ENCODE measurements at regions of chr16 and their contacts with region 1.

Region 1: GRCh38 chr16:30032083-30032819 is 1.2 kb upstream of the TLCD3B start:
- DNase-seq: no peak
- ATAC-seq: peak; percentile 77
- H3K4me3 ChIP-seq: no peak overlapping the region
- H3K27ac ChIP-seq: no peak overlapping the region
- H3K4me1 ChIP-seq: peaks cover 13% of the 10 kb centered on the region
- H3K27me3 ChIP-seq: peaks cover 6 to 12% of the 10 kb centered on the region in 2 experiments; a peak in 3 of 4 replicates
- CTCF ChIP-seq: peak; percentile 79 to 85 (median 84)
- EP300 ChIP-seq: no peak
- POLR2A ChIP-seq: no peak
- RAD21 ChIP-seq: peak; percentile 88

Region 2: GRCh38 chr16:29694384-29695195 is 337.7 kb before region 1 on chr16:
- CTCF ChIA-PET with region 1: no interaction called
- POLR2A ChIA-PET with region 1: interaction called, 6 read pairs
- RAD21 ChIA-PET with region 1: no interaction called
- SMC1A ChIA-PET with region 1: no interaction called
- in situ Hi-C with region 1: loop called (anchors 5 kb)
- intact Hi-C with region 1: no loop called
- DNase-seq: no peak
- ATAC-seq: peak; percentile 44
- H3K4me3 ChIP-seq: no peak overlapping the region
- H3K27ac ChIP-seq: no peak overlapping the region
- H3K4me1 ChIP-seq: peaks cover 7% of the 10 kb centered on the region
- H3K27me3 ChIP-seq: no peaks in the 10 kb centered on the region
- CTCF ChIP-seq: no peak
- EP300 ChIP-seq: no peak
- POLR2A ChIP-seq: no peak
- RAD21 ChIP-seq: no peak

Region 3: GRCh38 chr16:29790183-29790952 is 241.9 kb before region 1 on chr16 and contains the start of gene KIF22:
- CTCF ChIA-PET with region 1: no interaction called
- POLR2A ChIA-PET with region 1: no interaction called
- RAD21 ChIA-PET with region 1: no interaction called
- SMC1A ChIA-PET with region 1: no interaction called
- in situ Hi-C with region 1: no loop called
- intact Hi-C with region 1: no loop called
- DNase-seq: peak; percentile 97
- ATAC-seq: peak; percentile 98
- H3K4me3 ChIP-seq: peak within 1 kb of the TSS; percentile 93
- H3K27ac ChIP-seq: peak within 1 kb of the TSS; percentile 95
- H3K4me1 ChIP-seq: peaks cover 9% of the 10 kb centered on the region; the same call in 1 of the 2 replicates
- H3K27me3 ChIP-seq: no peaks in the 10 kb centered on the region
- CTCF ChIP-seq: peak; percentile 79 to 92 (median 89)
- EP300 ChIP-seq: no peak
- POLR2A ChIP-seq: peak; percentile 97
- RAD21 ChIP-seq: peak; percentile 61
- polyA plus RNA-seq, gene KIF22: 7.6 to 16.9 TPM

Region 4: GRCh38 chr16:29900102-29900887 is 132.0 kb before region 1 on chr16 and contains the start of gene ASPHD1:
- CTCF ChIA-PET with region 1: interaction called, 3 read pairs
- POLR2A ChIA-PET with region 1: no interaction called
- RAD21 ChIA-PET with region 1: interaction called, 5 read pairs
- SMC1A ChIA-PET with region 1: no interaction called
- in situ Hi-C with region 1: no loop called
- intact Hi-C with region 1: loop called (anchors 10 kb)
- DNase-seq: no peak
- ATAC-seq: peak; percentile 91
- H3K4me3 ChIP-seq: peak within 1 kb of the TSS; percentile 83
- H3K27ac ChIP-seq: no peak within 1 kb of the TSS
- H3K4me1 ChIP-seq: peaks cover 3% of the 10 kb centered on the region; the same call in 1 of the 2 replicates
- H3K27me3 ChIP-seq: no peaks in the 10 kb centered on the region; a peak in 1 of 4 replicates
- CTCF ChIP-seq: no peak
- EP300 ChIP-seq: no peak
- POLR2A ChIP-seq: no peak
- RAD21 ChIP-seq: no peak
- polyA plus RNA-seq, gene ASPHD1: not detected

Region 5: GRCh38 chr16:29926005-29926710 is 106.1 kb before region 1 on chr16 and contains the start of gene KCTD13:
- CTCF ChIA-PET with region 1: interaction called, 11 read pairs
- POLR2A ChIA-PET with region 1: no interaction called
- RAD21 ChIA-PET with region 1: interaction called, 4 read pairs
- SMC1A ChIA-PET with region 1: no interaction called
- in situ Hi-C with region 1: no loop called
- intact Hi-C with region 1: no loop called
- DNase-seq: peak; percentile 66
- ATAC-seq: peak; percentile 96
- H3K4me3 ChIP-seq: peak within 1 kb of the TSS; percentile 97
- H3K27ac ChIP-seq: peak within 1 kb of the TSS; percentile 91
- H3K4me1 ChIP-seq: peaks cover 11% of the 10 kb centered on the region
- H3K27me3 ChIP-seq: no peaks in the 10 kb centered on the region
- CTCF ChIP-seq: no peak
- EP300 ChIP-seq: no peak
- POLR2A ChIP-seq: peak; percentile 97
- RAD21 ChIP-seq: no peak
- polyA plus RNA-seq, gene KCTD13: 3.3 to 3.5 TPM

Region 6: DNA sequence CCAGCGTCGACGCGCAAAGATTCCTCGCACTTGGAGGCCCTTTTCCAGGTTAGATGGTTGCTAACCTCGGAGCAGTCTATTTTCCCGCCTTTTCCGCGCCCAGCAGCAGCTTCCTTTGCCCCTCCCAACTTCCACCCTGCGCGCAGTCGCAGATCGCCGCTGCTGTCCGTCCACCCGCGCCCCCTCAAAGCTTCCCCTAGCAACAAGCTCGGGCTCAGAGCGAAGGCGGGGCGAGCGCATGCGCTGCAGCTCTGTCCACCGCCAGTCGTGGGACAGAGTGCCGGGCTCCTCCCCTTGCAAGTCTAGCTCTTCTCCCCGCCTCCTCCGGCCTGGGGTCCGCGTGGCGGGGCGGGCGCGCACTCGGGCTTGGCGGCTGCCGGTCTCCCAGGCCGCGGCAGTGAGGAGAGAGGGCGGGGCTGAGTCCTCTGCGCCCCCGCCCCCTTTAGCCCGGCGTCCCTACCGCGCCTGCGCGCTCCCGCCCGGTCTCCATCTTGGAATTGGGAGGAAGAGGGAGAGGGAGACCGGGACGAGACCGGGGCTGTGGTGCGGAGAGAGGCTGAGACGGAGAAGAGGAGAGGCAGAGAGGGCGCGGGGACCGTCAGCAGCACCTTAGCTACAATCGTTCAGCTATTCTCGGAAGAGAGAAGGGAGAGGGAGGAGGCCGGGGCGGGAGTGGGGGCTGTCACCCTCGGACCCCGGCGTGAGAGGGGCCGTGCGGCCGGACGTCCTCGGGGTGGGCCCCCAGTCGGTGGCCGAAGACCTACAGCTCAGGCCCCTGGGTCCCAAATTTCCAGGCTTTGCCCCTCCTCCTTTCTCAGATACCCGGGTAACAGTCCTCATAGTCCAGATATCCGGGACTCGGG is 58.6 kb before region 1 on chr16 and contains the start of gene TAOK2:
- CTCF ChIA-PET with region 1: interaction called, 12 read pairs
- POLR2A ChIA-PET with region 1: no interaction called
- RAD21 ChIA-PET with region 1: no interaction called
- SMC1A ChIA-PET with region 1: no interaction called
- in situ Hi-C with region 1: no loop called
- intact Hi-C with region 1: no loop called
- DNase-seq: peak; percentile 92
- ATAC-seq: peak; percentile 98
- H3K4me3 ChIP-seq: peak within 1 kb of the TSS; percentile 99
- H3K27ac ChIP-seq: peak within 1 kb of the TSS; percentile 90
- H3K4me1 ChIP-seq: peaks cover 9% of the 10 kb centered on the region
- H3K27me3 ChIP-seq: no peaks in the 10 kb centered on the region
- CTCF ChIP-seq: no peak
- EP300 ChIP-seq: no peak
- POLR2A ChIP-seq: peak; percentile 85
- RAD21 ChIP-seq: no peak
- polyA plus RNA-seq, gene TAOK2: 0.14 to 0.51 TPM

Region 7: DNA sequence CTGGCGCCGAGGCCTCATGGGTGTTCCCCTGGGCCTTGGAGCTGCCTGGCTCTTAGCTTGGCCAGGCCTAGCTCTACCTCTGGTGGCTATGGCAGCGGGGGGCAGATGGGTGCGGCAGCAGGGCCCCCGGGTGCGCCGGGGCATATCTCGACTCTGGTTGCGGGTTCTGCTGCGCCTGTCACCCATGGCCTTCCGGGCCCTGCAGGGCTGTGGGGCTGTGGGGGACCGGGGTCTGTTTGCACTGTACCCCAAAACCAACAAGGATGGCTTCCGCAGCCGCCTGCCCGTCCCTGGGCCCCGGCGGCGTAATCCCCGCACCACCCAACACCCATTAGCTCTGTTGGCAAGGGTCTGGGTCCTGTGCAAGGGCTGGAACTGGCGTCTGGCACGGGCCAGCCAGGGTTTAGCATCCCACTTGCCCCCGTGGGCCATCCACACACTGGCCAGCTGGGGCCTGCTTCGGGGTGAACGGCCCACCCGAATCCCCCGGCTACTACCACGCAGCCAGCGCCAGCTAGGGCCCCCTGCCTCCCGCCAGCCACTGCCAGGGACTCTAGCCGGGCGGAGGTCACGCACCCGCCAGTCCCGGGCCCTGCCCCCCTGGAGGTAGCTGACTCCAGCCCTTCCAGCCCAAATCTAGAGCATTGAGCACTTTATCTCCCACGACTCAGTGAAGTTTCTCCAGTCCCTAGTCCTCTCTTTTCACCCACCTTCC is 44.7 kb before region 1 on chr16:
- CTCF ChIA-PET with region 1: no interaction called
- POLR2A ChIA-PET with region 1: no interaction called
- RAD21 ChIA-PET with region 1: no interaction called
- SMC1A ChIA-PET with region 1: no interaction called
- in situ Hi-C with region 1: no loop called
- intact Hi-C with region 1: no loop called
- DNase-seq: no peak
- ATAC-seq: no peak
- H3K4me3 ChIP-seq: no peak overlapping the region
- H3K27ac ChIP-seq: no peak overlapping the region
- H3K4me1 ChIP-seq: no peaks in the 10 kb centered on the region
- H3K27me3 ChIP-seq: no peaks in the 10 kb centered on the region
- CTCF ChIP-seq: no peak
- EP300 ChIP-seq: no peak
- POLR2A ChIP-seq: no peak
- RAD21 ChIP-seq: no peak

Region 8: DNA sequence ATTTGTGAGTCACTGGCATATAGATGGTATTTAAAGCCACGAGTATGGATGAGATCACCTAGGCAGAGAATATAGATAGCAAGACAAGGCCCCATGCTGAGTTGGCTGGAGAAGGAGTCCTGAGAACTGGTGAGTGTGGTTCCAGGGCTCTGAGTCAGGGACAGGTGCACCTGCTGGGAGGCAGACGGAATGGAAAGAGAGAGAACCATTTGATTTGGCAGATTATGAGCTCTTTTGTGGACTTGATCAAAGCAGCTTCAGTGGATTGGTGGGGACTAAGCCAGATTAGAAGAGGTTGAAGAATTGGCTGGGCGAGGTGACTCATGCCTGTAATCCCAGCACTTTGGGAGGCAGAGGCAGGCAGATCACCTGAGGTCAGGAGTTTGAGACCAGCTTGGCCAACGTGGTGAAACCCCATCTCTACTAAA is 13.5 kb before region 1 on chr16:
- CTCF ChIA-PET with region 1: interaction called, 12 read pairs
- POLR2A ChIA-PET with region 1: no interaction called
- RAD21 ChIA-PET with region 1: interaction called, 6 read pairs
- SMC1A ChIA-PET with region 1: interaction called, 3 read pairs
- in situ Hi-C with region 1: no loop called
- intact Hi-C with region 1: no loop called
- DNase-seq: no peak
- ATAC-seq: no peak
- H3K4me3 ChIP-seq: no peak overlapping the region
- H3K27ac ChIP-seq: no peak overlapping the region
- H3K4me1 ChIP-seq: 0 out of 2 replicates have a peak, but pooled peaks cover 2% of the 10 kb centered on the region
- H3K27me3 ChIP-seq: peaks cover 0 to 2% of the 10 kb centered on the region in 2 experiments; a peak in 1 of 4 replicates
- CTCF ChIP-seq: no peak
- EP300 ChIP-seq: no peak
- POLR2A ChIP-seq: no peak
- RAD21 ChIP-seq: no peak

Region 9: DNA sequence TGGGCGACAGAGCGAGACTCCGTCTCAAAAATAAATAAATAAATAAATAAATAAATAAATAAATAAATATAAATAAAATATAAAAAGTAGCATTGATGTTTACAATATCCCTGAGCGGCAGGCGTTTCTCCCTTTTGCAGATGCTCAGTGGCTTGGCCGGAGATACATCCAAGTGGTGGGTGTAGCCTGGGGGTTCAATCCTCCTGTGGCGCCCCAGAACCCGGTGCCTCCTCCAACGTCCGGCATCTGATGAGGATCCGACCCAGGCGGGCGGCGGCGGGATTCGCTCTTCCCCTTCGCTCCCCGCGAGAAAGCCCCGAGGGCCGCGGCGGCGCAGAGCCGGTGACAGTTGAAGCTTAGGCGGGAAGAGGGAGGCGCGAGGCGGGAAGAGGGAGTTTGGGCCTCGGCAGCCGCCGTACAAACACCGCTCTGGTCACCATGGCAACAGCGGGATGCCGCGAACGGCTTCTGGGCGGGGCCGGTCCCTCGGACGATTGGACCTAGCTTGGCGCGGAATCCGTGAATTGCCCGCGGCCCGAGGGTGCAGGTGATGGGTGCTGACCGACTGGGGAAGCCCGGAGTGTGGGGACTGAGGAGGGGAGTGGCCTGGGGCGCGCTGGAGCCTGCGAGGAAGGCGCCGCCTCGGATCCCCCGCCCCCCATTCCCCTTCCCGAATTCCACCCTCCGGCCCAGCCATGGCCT is 20.6 kb after region 1 on chr16:
- CTCF ChIA-PET with region 1: interaction called, 21 read pairs
- POLR2A ChIA-PET with region 1: interaction called, 5 read pairs
- RAD21 ChIA-PET with region 1: interaction called, 12 read pairs
- SMC1A ChIA-PET with region 1: interaction called, 4 read pairs
- in situ Hi-C with region 1: no loop called
- intact Hi-C with region 1: no loop called
- DNase-seq: peak; percentile 74
- ATAC-seq: peak; percentile 90
- H3K4me3 ChIP-seq: peak overlapping the region; percentile 83
- H3K27ac ChIP-seq: peak overlapping the region; percentile 55
- H3K4me1 ChIP-seq: peaks cover 3% of the 10 kb centered on the region; the same call in 1 of the 2 replicates
- H3K27me3 ChIP-seq: no peaks in the 10 kb centered on the region
- CTCF ChIP-seq: no peak
- EP300 ChIP-seq: peak in 1 of 2 experiments; percentile 49; a peak in 1 of 4 replicates
- POLR2A ChIP-seq: peak; percentile 70
- RAD21 ChIP-seq: no peak

Region 10: GRCh38 chr16:30084816-30085159 is 52.5 kb after region 1 on chr16:
- CTCF ChIA-PET with region 1: no interaction called
- POLR2A ChIA-PET with region 1: no interaction called
- RAD21 ChIA-PET with region 1: no interaction called
- SMC1A ChIA-PET with region 1: no interaction called
- in situ Hi-C with region 1: no loop called
- intact Hi-C with region 1: no loop called
- DNase-seq: no peak
- ATAC-seq: no peak
- H3K4me3 ChIP-seq: no peak overlapping the region
- H3K27ac ChIP-seq: no peak overlapping the region
- H3K4me1 ChIP-seq: no peaks in the 10 kb centered on the region
- H3K27me3 ChIP-seq: no peaks in the 10 kb centered on the region
- CTCF ChIP-seq: no peak
- EP300 ChIP-seq: no peak
- POLR2A ChIP-seq: no peak
- RAD21 ChIP-seq: no peak

Measured in GM12878 (cell line).